Heart right ventricle (tissue), 16 donors: ENCODE measurements at regions of chrX and their contacts with region 1.

Region 1: GRCh38 chrX:145190801-145191389 is 56.4 kb upstream of the SPANXN1 start:
- DNase-seq: no peak
- ATAC-seq: no peak
- H3K4me3 ChIP-seq: no peak overlapping the region
- H3K27ac ChIP-seq: no peak overlapping the region
- H3K4me1 ChIP-seq: no peaks in the 10 kb centered on the region
- H3K27me3 ChIP-seq: no peaks in the 10 kb centered on the region
- CTCF ChIP-seq: peak in 7 of 9 donors; percentile 13 to 50 (median 29)

Region 2: GRCh38 chrX:143664302-143664701 is 1526.6 kb before region 1 on chrX:
- intact Hi-C with region 1: loop called in 2 of 10 experiments (anchors 10 kb)
- DNase-seq: no peak
- ATAC-seq: no peak
- H3K4me3 ChIP-seq: no peak overlapping the region
- H3K27ac ChIP-seq: no peak overlapping the region
- H3K4me1 ChIP-seq: no peaks in the 10 kb centered on the region
- H3K27me3 ChIP-seq: peaks cover 0 to 5% (median 0%) of the 10 kb centered on the region in 7 donors
- CTCF ChIP-seq: peak in 7 of 9 donors; percentile 33 to 57 (median 45)

Region 3: DNA sequence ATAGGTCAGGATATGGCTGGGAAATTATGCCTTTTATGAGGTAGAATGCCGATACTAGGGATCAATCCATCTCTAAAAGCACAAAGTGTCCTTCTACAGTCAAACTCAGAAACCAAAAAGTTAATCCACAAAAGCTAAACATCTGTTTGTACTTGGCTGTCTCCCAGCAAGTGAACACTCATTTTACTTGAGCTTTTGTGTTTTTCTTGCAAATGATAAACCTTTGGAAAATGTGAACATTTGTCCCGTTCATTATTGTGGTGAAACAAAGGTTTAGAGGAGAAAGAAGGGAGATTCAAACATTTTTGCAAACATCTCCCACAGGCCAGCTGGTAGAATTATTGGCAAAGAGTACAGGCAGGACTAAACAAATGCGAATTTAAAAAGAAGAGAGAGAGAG is 244.2 kb before region 1 on chrX:
- intact Hi-C with region 1: no loop called
- DNase-seq: no peak
- ATAC-seq: no peak
- H3K4me3 ChIP-seq: no peak overlapping the region
- H3K27ac ChIP-seq: no peak overlapping the region
- H3K4me1 ChIP-seq: no peaks in the 10 kb centered on the region
- H3K27me3 ChIP-seq: no peaks in the 10 kb centered on the region
- CTCF ChIP-seq: no peak

Region 4: DNA sequence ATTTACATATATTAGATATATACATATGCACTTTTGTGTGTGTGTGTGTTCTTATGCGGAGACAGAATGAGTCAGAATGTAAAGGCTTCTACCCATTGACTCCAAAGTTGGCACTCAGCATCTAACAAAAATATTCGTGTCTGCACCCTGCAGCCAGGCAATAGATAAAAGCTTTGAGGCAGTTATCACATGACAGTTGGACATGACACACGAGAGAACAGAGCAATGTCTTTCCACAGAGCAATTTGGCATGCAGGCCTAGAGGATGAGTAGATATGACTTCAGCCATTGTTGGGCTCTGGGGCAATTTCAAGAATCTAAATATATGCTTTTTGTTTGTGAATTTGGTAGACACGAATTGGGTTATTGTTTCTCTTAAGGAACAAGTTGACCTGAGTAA is 1017.9 kb after region 1 on chrX:
- intact Hi-C with region 1: no loop called
- DNase-seq: no peak
- ATAC-seq: no peak
- H3K4me3 ChIP-seq: no peak overlapping the region
- H3K27ac ChIP-seq: no peak overlapping the region
- H3K4me1 ChIP-seq: no peaks in the 10 kb centered on the region
- H3K27me3 ChIP-seq: no peaks in the 10 kb centered on the region
- CTCF ChIP-seq: no peak